CD4-positive, alpha-beta T cell (primary cell): ENCODE measurements at regions of chr6 and their contacts with region 1.

Region 1: GRCh38 chr6:44265007-44265721 is at the start of gene NFKBIE:
- DNase-seq: peak; percentile 87 to 97 (median 94)
- ATAC-seq: peak; percentile 79
- H3K4me3 ChIP-seq: peak within 1 kb of the TSS; percentile 99
- H3K4me3 Mint-ChIP-seq: peak within 1 kb of the TSS; percentile 97
- H3K27ac ChIP-seq: peak within 1 kb of the TSS; percentile 93
- H3K27ac Mint-ChIP-seq: peak within 1 kb of the TSS; percentile 84
- H3K4me1 ChIP-seq: peaks cover 51% of the 10 kb centered on the region
- H3K4me1 Mint-ChIP-seq: peaks cover 62% of the 10 kb centered on the region
- H3K27me3 ChIP-seq: peaks cover 16 to 21% of the 10 kb centered on the region in 2 experiments
- H3K27me3 Mint-ChIP-seq: peaks cover 22% of the 10 kb centered on the region
- CTCF ChIP-seq: peak; percentile 67
- total RNA-seq, gene NFKBIE: 43.0 to 43.1 TPM

Region 2: GRCh38 chr6:44096612-44097011 is 168.6 kb before region 1 on chr6:
- CTCF ChIA-PET with region 1: no interaction called
- POLR2A ChIA-PET with region 1: no interaction called
- intact Hi-C with region 1: loop called in 1 of 2 experiments (anchors 10 kb)
- DNase-seq: peak; percentile 64 to 87 (median 70)
- ATAC-seq: peak; percentile 95
- H3K4me3 ChIP-seq: no peak overlapping the region
- H3K4me3 Mint-ChIP-seq: no peak overlapping the region
- H3K27ac ChIP-seq: no peak overlapping the region
- H3K27ac Mint-ChIP-seq: no peak overlapping the region
- H3K4me1 ChIP-seq: no peaks in the 10 kb centered on the region
- H3K4me1 Mint-ChIP-seq: no peaks in the 10 kb centered on the region
- H3K27me3 ChIP-seq: no peaks in the 10 kb centered on the region
- H3K27me3 Mint-ChIP-seq: no peaks in the 10 kb centered on the region
- CTCF ChIP-seq: peak; percentile 73

Region 3: DNA sequence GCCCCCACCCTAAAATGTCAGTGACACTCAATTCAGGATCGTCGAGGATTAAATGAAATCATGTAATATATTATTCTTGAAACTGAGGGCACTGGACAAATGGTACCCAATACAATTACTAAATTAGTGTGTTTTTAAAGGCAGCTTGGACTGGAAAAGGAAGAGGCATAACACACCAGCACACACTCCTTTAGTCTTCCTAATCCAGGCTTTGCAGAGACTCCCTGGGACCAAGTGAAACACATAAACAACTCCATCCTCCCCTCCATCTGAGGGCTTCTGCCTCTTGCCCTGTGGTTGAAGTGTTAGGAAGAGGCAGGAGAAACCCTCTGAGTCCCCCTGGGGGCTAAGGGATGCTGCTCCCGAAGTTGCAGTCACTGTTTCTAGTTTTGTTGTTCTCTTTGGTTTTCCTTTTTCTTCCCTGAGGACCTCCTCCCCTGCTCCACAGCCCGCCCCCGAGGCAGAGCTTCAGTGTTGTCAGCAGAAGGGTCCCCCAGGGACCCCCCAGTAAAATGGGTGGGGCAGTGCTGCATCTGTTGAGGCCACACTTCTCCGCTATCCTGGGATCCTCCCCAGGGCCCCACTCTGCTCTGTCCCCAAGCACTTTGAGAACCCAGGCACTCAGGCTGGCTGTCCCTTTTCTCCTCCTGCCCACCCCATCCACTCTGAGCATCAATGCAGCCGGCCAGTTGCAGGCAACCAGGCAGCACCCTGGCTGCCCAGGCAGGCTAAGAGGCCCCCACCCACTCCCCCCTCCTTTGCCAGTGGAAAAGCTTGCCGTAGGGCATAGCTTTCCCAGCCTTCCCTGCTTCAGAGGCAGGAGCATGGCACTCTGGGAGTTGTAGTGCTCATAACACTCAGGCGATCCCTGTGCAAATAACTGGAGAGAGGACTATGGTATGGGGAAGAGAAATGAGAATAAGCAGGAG is 131.9 kb before region 1 on chr6:
- CTCF ChIA-PET with region 1: no interaction called
- POLR2A ChIA-PET with region 1: no interaction called
- intact Hi-C with region 1: no loop called
- DNase-seq: no peak
- ATAC-seq: no peak
- H3K4me3 ChIP-seq: no peak overlapping the region
- H3K4me3 Mint-ChIP-seq: peak overlapping the region; percentile 62
- H3K27ac ChIP-seq: no peak overlapping the region
- H3K27ac Mint-ChIP-seq: no peak overlapping the region
- H3K4me1 ChIP-seq: peaks cover 15% of the 10 kb centered on the region
- H3K4me1 Mint-ChIP-seq: peaks cover 23% of the 10 kb centered on the region
- H3K27me3 ChIP-seq: no peaks in the 10 kb centered on the region
- H3K27me3 Mint-ChIP-seq: no peaks in the 10 kb centered on the region
- CTCF ChIP-seq: no peak

Region 4: GRCh38 chr6:44304282-44305199 is 39.4 kb after region 1 on chr6:
- CTCF ChIA-PET with region 1: interaction called, 24 read pairs
- POLR2A ChIA-PET with region 1: no interaction called
- intact Hi-C with region 1: loop called (anchors 1 kb)
- DNase-seq: peak; percentile 18 to 68 (median 36)
- ATAC-seq: peak; percentile 80
- H3K4me3 ChIP-seq: no peak overlapping the region
- H3K4me3 Mint-ChIP-seq: no peak overlapping the region
- H3K27ac ChIP-seq: no peak overlapping the region
- H3K27ac Mint-ChIP-seq: no peak overlapping the region
- H3K4me1 ChIP-seq: no peaks in the 10 kb centered on the region
- H3K4me1 Mint-ChIP-seq: peaks cover under 1% of the 10 kb centered on the region
- H3K27me3 ChIP-seq: no peaks in the 10 kb centered on the region
- H3K27me3 Mint-ChIP-seq: no peaks in the 10 kb centered on the region
- CTCF ChIP-seq: peak; percentile 80

Region 5: GRCh38 chr6:44338228-44339122 is 73.3 kb after region 1 on chr6:
- CTCF ChIA-PET with region 1: interaction called, 12 read pairs
- POLR2A ChIA-PET with region 1: no interaction called
- intact Hi-C with region 1: loop called (anchors 1 kb)
- DNase-seq: peak; percentile 36 to 81 (median 55)
- ATAC-seq: peak; percentile 91
- H3K4me3 ChIP-seq: no peak overlapping the region
- H3K4me3 Mint-ChIP-seq: no peak overlapping the region
- H3K27ac ChIP-seq: no peak overlapping the region
- H3K27ac Mint-ChIP-seq: no peak overlapping the region
- H3K4me1 ChIP-seq: peaks cover 8% of the 10 kb centered on the region
- H3K4me1 Mint-ChIP-seq: no peaks in the 10 kb centered on the region
- H3K27me3 ChIP-seq: peaks cover 21 to 26% of the 10 kb centered on the region in 2 experiments
- H3K27me3 Mint-ChIP-seq: peaks cover 33% of the 10 kb centered on the region
- CTCF ChIP-seq: peak; percentile 69

Region 6: GRCh38 chr6:44456070-44456965 is 191.2 kb after region 1 on chr6:
- CTCF ChIA-PET with region 1: no interaction called
- POLR2A ChIA-PET with region 1: no interaction called
- intact Hi-C with region 1: loop called in 1 of 2 experiments (anchors 5 kb)
- DNase-seq: peak in 11 of 14 experiments; percentile 6 to 72 (median 24)
- ATAC-seq: peak; percentile 75
- H3K4me3 ChIP-seq: no peak overlapping the region
- H3K4me3 Mint-ChIP-seq: no peak overlapping the region
- H3K27ac ChIP-seq: no peak overlapping the region
- H3K27ac Mint-ChIP-seq: no peak overlapping the region
- H3K4me1 ChIP-seq: no peaks in the 10 kb centered on the region
- H3K4me1 Mint-ChIP-seq: no peaks in the 10 kb centered on the region
- H3K27me3 ChIP-seq: peaks cover 0 to 2% of the 10 kb centered on the region in 2 experiments
- H3K27me3 Mint-ChIP-seq: no peaks in the 10 kb centered on the region
- CTCF ChIP-seq: peak; percentile 76